ENCODE measurements at regions of chr10 and their contacts with region 1.

Region 1: GRCh38 chr10:14185316-14186045 is 145.2 kb downstream of the FRMD4A start:
- DNase-seq: peak; percentile 64
- ATAC-seq: peak; percentile 91
- H3K4me3 Mint-ChIP-seq: peak overlapping the region; percentile 42
- H3K27ac Mint-ChIP-seq: peak overlapping the region; percentile 86
- H3K4me1 Mint-ChIP-seq: peaks cover 18% of the 10 kb centered on the region
- H3K27me3 Mint-ChIP-seq: peaks cover 37% of the 10 kb centered on the region

Region 2: DNA sequence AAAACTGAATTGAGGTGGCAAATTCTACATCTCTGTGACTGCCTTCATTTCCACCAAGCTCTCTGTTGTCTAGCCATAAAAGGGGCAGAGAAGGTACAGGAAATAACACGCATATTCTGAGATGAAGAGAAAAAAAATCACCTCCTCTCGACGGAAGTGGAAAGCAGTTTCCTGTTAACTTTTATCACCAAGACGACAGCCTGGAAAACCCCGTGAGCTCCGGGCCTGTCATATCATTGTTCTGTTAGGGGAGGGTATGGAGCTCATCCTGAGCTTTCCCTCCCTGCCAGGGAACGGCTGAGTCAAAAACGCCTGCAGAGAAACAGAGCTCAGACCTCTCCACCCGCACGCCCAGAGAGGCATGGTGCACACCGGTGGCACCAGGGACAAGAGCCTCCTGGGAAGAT is 398.5 kb before region 1 on chr10:
- CTCF ChIA-PET with region 1: interaction called, 7 read pairs
- POLR2A ChIA-PET with region 1: interaction called, 21 read pairs
- DNase-seq: peak; percentile 82
- ATAC-seq: peak; percentile 91
- H3K4me3 Mint-ChIP-seq: peak overlapping the region; percentile 70
- H3K27ac Mint-ChIP-seq: peak overlapping the region; percentile 95
- H3K4me1 Mint-ChIP-seq: peaks cover 14% of the 10 kb centered on the region
- H3K27me3 Mint-ChIP-seq: no peaks in the 10 kb centered on the region

Region 3: DNA sequence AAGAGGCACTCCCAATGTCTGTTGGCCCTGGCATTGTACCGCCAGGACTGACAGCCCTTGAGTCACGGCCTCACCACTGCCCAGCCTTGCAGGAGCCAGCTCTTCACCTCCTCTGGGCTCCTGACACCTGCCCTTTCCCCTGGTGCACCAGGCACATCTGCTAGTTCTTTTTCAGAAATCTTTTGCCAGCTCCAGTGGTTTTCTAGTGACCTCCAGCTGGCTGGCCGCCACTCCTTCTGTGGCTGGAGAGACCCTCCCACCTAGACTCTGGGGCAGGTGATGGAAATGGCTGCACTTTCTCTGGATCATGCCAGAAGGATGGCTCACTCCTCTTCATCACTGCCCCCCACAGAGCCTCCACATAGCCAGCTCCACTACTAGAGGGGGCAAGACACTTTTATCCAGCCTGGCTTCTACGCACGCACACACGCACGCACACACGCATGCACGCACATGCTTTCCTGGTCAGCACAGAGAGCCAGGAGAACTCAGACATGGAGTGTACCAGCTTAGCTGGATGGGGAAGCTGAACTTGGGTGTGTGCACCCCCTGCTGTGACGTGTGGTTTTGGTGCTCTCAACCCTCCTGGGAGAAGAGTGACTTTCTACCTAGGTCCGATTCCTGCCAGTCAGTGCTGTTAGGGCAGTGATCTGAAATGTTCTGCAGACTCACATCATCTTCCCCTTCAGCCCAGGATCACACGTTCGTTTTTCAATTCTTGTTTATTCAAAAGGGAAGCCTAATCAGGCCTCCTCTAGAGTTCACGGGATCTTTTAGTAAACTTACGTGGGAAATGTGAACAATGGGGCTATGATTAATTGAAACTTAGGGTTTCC is 376.7 kb before region 1 on chr10:
- CTCF ChIA-PET with region 1: no interaction called
- POLR2A ChIA-PET with region 1: no interaction called
- DNase-seq: no peak
- ATAC-seq: no peak
- H3K4me3 Mint-ChIP-seq: no peak overlapping the region
- H3K27ac Mint-ChIP-seq: no peak overlapping the region
- H3K4me1 Mint-ChIP-seq: no peaks in the 10 kb centered on the region
- H3K27me3 Mint-ChIP-seq: no peaks in the 10 kb centered on the region

Region 4: DNA sequence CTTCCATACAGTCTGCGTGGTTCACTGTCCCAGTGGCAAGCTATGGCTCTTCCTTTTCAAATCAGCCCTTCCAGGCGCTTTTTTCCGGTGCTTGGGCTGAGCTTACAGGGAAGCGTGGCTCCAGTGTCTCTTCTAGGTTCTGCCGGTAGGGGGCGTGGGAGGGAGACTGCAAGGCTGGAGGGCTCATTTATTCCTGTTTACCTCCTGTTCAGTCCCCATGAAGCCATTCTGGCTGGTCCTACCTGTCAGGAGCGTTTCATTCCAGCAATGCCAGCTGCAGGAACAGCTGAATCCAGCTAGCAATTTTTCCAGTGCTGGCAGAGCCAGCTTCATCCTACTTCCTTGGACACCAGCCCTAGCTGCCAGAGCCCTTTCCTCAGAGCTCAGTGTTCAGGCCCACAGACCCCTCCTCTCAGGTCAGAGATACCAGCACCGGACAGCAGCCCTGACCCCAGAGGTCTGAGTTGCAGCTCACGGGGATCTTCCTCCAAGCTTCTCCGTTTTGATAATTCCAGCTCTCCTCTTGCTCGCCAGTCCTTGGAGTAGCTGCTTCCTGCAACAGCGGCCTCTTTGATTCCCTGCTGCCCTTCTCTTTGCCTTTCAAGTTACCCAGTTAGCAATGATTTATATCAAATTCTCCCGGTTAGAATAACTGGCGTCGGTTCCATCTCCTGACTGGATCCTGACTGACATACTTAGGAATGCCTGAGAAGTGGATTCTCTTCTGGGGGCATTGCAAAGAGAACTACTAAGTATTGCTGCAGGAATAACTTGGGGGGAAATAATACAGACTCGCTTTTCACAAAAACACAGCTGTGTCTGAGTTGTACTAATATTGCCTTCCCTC is 15.4 kb after region 1 on chr10:
- CTCF ChIA-PET with region 1: interaction called, 71 read pairs
- POLR2A ChIA-PET with region 1: interaction called, 18 read pairs
- DNase-seq: no peak
- ATAC-seq: no peak
- H3K4me3 Mint-ChIP-seq: no peak overlapping the region
- H3K27ac Mint-ChIP-seq: no peak overlapping the region
- H3K4me1 Mint-ChIP-seq: no peaks in the 10 kb centered on the region
- H3K27me3 Mint-ChIP-seq: peaks cover 18% of the 10 kb centered on the region

Region 5: GRCh38 chr10:14282276-14282675 is 96.8 kb after region 1 on chr10:
- CTCF ChIA-PET with region 1: no interaction called
- POLR2A ChIA-PET with region 1: no interaction called
- DNase-seq: no peak
- ATAC-seq: no peak
- H3K4me3 Mint-ChIP-seq: no peak overlapping the region
- H3K27ac Mint-ChIP-seq: no peak overlapping the region
- H3K4me1 Mint-ChIP-seq: no peaks in the 10 kb centered on the region
- H3K27me3 Mint-ChIP-seq: peaks cover 9% of the 10 kb centered on the region

Region 6: GRCh38 chr10:14959276-14960057 is 774.0 kb after region 1 on chr10 and contains the start of gene MEIG1:
- CTCF ChIA-PET with region 1: no interaction called
- POLR2A ChIA-PET with region 1: interaction called, 10 read pairs
- DNase-seq: peak; percentile 92
- ATAC-seq: peak; percentile 93
- H3K4me3 Mint-ChIP-seq: peak within 1 kb of the TSS; percentile 95
- H3K27ac Mint-ChIP-seq: peak within 1 kb of the TSS; percentile 99
- H3K4me1 Mint-ChIP-seq: peaks cover 44% of the 10 kb centered on the region
- H3K27me3 Mint-ChIP-seq: no peaks in the 10 kb centered on the region
- total RNA-seq, gene MEIG1: not detected

Measured in activated CD8-positive, alpha-beta T cell treated with anti-CD3 and anti-CD28 coated beads, Interleukin-2, amount 10 ng/mL, durations not matched to agents 7 days and 5 days (primary cell).